ENCODE measurements at regions of chr3 and their contacts with region 1.

Region 1: DNA sequence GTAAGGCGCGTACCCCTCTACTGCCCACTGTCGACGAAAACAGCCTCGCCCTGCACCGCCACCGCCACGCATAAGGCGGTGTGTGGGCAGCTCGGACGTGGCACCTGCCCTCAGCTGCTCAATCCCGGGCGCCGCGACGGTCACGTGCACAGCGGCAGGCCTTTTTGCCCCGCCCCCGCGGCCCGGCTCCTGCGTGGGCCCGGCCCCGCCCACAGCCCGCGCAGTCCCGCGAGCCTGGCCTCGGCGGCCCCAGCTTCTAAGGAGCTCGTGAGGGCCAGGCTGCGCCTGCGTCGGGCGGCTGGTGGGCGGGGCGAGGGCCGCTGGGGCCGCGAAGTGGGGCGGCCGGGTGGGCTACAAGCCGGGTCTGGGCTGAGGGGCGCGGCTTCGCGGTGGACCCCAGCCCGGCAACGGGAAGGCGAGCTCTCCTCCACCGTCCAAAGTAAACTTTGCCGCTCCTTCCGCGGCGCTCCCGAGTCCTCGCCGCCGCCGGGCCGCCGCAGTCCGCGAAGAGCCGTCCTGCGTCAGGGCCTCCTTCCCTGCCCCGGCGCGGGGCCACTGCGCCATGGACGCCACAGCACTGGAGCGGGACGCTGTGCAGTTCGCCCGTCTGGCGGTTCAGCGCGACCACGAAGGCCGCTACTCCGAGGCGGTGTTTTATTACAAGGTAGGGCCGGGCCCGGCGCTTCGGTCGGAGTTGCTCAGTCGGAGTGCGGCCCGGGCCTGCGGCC is at the start of gene CAPN7:
- DNase-seq: peak; percentile 96
- H3K4me3 Mint-ChIP-seq: peak within 1 kb of the TSS; percentile 81
- H3K27ac Mint-ChIP-seq: peak within 1 kb of the TSS; percentile 82
- H3K4me1 Mint-ChIP-seq: peaks cover 29% of the 10 kb centered on the region
- H3K27me3 Mint-ChIP-seq: no peaks in the 10 kb centered on the region
- total RNA-seq, gene CAPN7: 23.6 to 28.1 TPM

Region 2: GRCh38 chr3:14921078-14921616 is 285.0 kb before region 1 on chr3:
- CTCF ChIA-PET with region 1: interaction called, 5 read pairs
- POLR2A ChIA-PET with region 1: no interaction called
- intact Hi-C with region 1: loop called (anchors 5 kb)
- DNase-seq: peak; percentile 88
- H3K4me3 Mint-ChIP-seq: no peak overlapping the region
- H3K27ac Mint-ChIP-seq: no peak overlapping the region
- H3K4me1 Mint-ChIP-seq: no peaks in the 10 kb centered on the region
- H3K27me3 Mint-ChIP-seq: no peaks in the 10 kb centered on the region

Region 3: GRCh38 chr3:15098503-15099363 is 107.4 kb before region 1 on chr3 and contains the start of gene RBSN:
- CTCF ChIA-PET with region 1: interaction called, 4 read pairs
- POLR2A ChIA-PET with region 1: interaction called, 6 read pairs
- intact Hi-C with region 1: loop called (anchors 1 kb)
- DNase-seq: peak; percentile 98
- H3K4me3 Mint-ChIP-seq: peak within 1 kb of the TSS; percentile 94
- H3K27ac Mint-ChIP-seq: peak within 1 kb of the TSS; percentile 94
- H3K4me1 Mint-ChIP-seq: peaks cover 18% of the 10 kb centered on the region
- H3K27me3 Mint-ChIP-seq: no peaks in the 10 kb centered on the region
- total RNA-seq, gene RBSN: 15.0 to 15.3 TPM

Region 4: GRCh38 chr3:15268033-15268631 is 62.0 kb after region 1 on chr3:
- CTCF ChIA-PET with region 1: interaction called, 76 read pairs
- POLR2A ChIA-PET with region 1: interaction called, 3 read pairs
- intact Hi-C with region 1: loop called (anchors 2 kb)
- DNase-seq: peak; percentile 91
- H3K4me3 Mint-ChIP-seq: no peak overlapping the region
- H3K27ac Mint-ChIP-seq: peak overlapping the region; percentile 65
- H3K4me1 Mint-ChIP-seq: peaks cover 79% of the 10 kb centered on the region
- H3K27me3 Mint-ChIP-seq: no peaks in the 10 kb centered on the region

Region 5: GRCh38 chr3:15377961-15378791 is 172.1 kb after region 1 on chr3:
- CTCF ChIA-PET with region 1: interaction called, 10 read pairs
- POLR2A ChIA-PET with region 1: no interaction called
- intact Hi-C with region 1: loop called (anchors 1 kb)
- DNase-seq: peak; percentile 97
- H3K4me3 Mint-ChIP-seq: peak overlapping the region; percentile 20
- H3K27ac Mint-ChIP-seq: peak overlapping the region; percentile 79
- H3K4me1 Mint-ChIP-seq: peaks cover 18% of the 10 kb centered on the region
- H3K27me3 Mint-ChIP-seq: no peaks in the 10 kb centered on the region

Region 6: DNA sequence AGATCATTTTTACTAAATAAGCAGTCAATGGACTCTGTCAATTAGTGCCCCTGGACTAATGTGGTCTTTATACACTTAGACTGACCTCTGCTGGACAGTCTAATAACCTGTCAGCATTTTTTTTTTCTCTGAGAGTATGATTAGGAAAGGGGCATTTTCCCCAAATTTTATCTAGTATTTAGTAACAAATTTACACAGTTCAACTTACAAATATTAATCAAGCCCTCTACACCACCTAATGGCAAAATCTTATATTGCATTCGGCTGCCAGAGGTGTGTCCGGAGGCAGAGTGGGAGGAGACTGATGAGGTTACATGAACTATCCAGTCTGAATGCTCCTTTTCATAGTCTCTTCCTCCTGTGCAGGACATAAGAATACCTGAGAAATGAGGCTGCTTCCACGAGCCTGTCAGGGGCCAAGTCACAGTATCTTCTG is 351.4 kb after region 1 on chr3:
- CTCF ChIA-PET with region 1: interaction called, 39 read pairs
- POLR2A ChIA-PET with region 1: no interaction called
- intact Hi-C with region 1: loop called (anchors 1 kb)
- DNase-seq: peak; percentile 75
- H3K4me3 Mint-ChIP-seq: no peak overlapping the region
- H3K27ac Mint-ChIP-seq: no peak overlapping the region
- H3K4me1 Mint-ChIP-seq: peaks cover 21% of the 10 kb centered on the region
- H3K27me3 Mint-ChIP-seq: no peaks in the 10 kb centered on the region

Region 7: GRCh38 chr3:15859507-15860013 is 653.5 kb after region 1 on chr3:
- CTCF ChIA-PET with region 1: no interaction called
- POLR2A ChIA-PET with region 1: no interaction called
- intact Hi-C with region 1: loop called (anchors 5 kb)
- DNase-seq: peak; percentile 82
- H3K4me3 Mint-ChIP-seq: peak overlapping the region; percentile 96
- H3K27ac Mint-ChIP-seq: peak overlapping the region; percentile 91
- H3K4me1 Mint-ChIP-seq: peaks cover 21% of the 10 kb centered on the region
- H3K27me3 Mint-ChIP-seq: no peaks in the 10 kb centered on the region

Measured in activated CD4-positive, alpha-beta memory T cell treated with anti-CD3 and anti-CD28 coated beads for 36 hours (primary cell).